ENCODE measurements at regions of chr2 and their contacts with region 1.

Region 1: GRCh38 chr2:216108967-216109921 is at the start of gene XRCC5:
- DNase-seq: peak; percentile 99
- H3K4me3 Mint-ChIP-seq: peak within 1 kb of the TSS; percentile 100
- H3K27ac Mint-ChIP-seq: peak within 1 kb of the TSS; percentile 100
- H3K4me1 Mint-ChIP-seq: peaks cover 51% of the 10 kb centered on the region
- H3K27me3 Mint-ChIP-seq: peaks cover 2% of the 10 kb centered on the region
- total RNA-seq, gene XRCC5: 510 to 515 TPM

Region 2: DNA sequence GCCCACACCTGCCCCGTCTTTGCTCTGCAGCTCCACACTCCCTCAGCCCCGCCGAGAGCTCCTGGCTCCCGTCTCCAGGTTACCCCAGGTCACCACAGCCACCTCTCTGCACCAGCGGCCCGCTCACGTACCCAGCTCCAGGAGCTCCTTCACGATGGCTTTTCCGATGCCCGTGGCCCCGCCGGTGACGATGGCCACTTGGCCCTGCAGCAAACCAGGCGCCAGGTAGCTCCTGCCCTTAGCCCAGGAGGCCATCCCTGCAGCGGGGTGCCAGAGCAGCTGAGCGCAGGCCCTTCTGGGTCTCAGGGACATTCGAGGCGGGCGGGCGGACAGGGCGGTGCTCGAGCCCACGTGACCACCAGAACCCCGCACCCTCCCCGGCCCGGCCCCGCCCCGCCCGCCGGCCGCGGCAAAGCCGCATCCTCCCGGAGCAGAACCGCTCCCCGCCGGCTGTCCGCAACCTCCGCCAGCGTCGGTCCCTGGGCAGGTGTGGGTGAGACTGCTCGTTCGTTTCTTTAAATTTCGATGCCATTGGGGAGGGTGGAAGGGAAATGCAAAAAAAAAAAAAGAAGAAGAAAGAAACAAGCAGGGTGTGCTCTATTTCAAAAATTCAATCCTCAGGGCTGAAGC is 27.6 kb before region 1 on chr2 and contains the starts of genes PECR and TMEM169:
- CTCF ChIA-PET with region 1: interaction called, 35 read pairs
- POLR2A ChIA-PET with region 1: interaction called, 9 read pairs
- intact Hi-C with region 1: loop called (anchors 1 kb)
- DNase-seq: peak; percentile 87
- H3K4me3 Mint-ChIP-seq: peak within 1 kb of the TSS; percentile 96
- H3K27ac Mint-ChIP-seq: peak within 1 kb of the TSS; percentile 81
- H3K4me1 Mint-ChIP-seq: peaks cover 51% of the 10 kb centered on the region
- H3K27me3 Mint-ChIP-seq: no peaks in the 10 kb centered on the region
- total RNA-seq, gene PECR: 23.3 to 27.6 TPM
- total RNA-seq, gene TMEM169: 2.0 to 2.7 TPM

Region 3: DNA sequence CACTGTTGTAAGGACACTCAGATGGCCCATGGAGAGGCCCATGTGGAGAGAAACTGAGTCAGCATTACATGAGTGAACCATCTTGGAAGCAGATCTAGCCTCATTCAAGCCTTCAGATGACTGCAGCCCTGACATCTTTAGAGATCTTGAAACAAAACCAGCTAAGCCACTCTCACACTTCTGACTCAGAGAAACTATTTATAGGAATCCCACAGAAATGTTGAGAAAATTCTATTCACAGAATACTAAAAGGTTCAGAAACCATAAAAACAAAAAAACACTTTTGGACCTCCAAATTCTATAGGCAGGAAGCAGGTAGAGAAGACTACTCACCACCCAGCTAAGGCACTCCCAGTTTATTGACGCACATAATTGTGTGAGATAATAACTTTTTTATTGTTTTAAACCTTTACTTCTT is 18.9 kb before region 1 on chr2:
- CTCF ChIA-PET with region 1: interaction called, 7 read pairs
- POLR2A ChIA-PET with region 1: interaction called, 5 read pairs
- intact Hi-C with region 1: loop called (anchors 1 kb)
- DNase-seq: peak; percentile 23
- H3K4me3 Mint-ChIP-seq: no peak overlapping the region
- H3K27ac Mint-ChIP-seq: peak overlapping the region; percentile 60
- H3K4me1 Mint-ChIP-seq: peaks cover 23% of the 10 kb centered on the region
- H3K27me3 Mint-ChIP-seq: no peaks in the 10 kb centered on the region

Region 4: DNA sequence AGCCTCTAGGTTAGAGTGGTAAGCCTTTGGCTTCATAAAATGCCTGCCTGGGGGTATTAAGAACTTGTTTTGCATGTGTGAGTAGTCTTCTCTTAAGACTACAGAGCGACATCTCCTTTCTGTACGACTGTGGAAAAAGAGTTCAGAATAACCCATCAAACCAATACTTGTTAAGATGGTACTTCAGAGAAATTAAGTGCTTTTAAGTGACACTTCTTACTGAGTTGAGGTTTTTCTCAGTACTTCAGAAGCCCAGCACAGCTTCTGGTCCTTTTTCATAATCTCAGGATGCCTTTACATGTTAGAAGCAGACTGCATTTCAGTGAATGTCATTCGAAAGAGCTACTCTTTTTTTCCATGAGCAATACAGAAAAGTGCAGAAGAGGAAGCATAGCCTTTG is 10.7 kb after region 1 on chr2:
- CTCF ChIA-PET with region 1: interaction called, 50 read pairs
- POLR2A ChIA-PET with region 1: interaction called, 4 read pairs
- intact Hi-C with region 1: loop called (anchors 1 kb)
- DNase-seq: no peak
- H3K4me3 Mint-ChIP-seq: peak overlapping the region; percentile 9
- H3K27ac Mint-ChIP-seq: peak overlapping the region; percentile 91
- H3K4me1 Mint-ChIP-seq: peaks cover 81% of the 10 kb centered on the region
- H3K27me3 Mint-ChIP-seq: no peaks in the 10 kb centered on the region

Region 5: DNA sequence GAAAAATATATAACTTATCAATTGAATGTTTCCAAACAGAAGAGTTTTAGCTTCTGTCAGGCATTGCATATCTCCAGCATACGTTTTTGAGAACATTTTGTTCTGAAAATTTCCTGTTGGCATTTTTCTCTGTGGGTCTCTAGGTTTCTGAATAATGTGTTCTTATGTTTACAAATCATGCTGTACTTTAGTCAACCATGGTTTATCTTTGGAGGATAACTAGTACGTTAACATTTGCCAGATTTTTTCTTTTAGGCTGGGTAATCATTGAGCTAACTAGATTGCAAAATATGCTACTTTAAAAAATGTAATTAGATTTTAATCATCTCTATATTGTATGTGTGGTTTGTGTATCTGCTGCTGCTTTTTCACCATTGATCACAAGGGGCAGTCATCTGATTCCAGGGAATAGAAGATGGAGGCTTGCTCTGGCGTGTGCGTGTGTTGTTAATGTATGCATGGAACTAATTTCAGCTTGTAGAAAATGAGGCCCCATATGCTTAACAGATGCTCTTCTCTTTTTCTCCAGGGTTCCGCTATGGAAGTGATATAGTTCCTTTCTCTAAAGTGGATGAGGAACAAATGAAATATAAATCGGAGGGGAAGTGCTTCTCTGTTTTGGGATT is 21.2 kb after region 1 on chr2:
- CTCF ChIA-PET with region 1: interaction called, 14 read pairs
- POLR2A ChIA-PET with region 1: interaction called, 4 read pairs
- intact Hi-C with region 1: loop called (anchors 1 kb)
- DNase-seq: no peak
- H3K4me3 Mint-ChIP-seq: no peak overlapping the region
- H3K27ac Mint-ChIP-seq: no peak overlapping the region
- H3K4me1 Mint-ChIP-seq: peaks cover 75% of the 10 kb centered on the region
- H3K27me3 Mint-ChIP-seq: no peaks in the 10 kb centered on the region

Region 6: GRCh38 chr2:216139884-216140283 is 30.6 kb after region 1 on chr2:
- CTCF ChIA-PET with region 1: interaction called, 48 read pairs
- POLR2A ChIA-PET with region 1: no interaction called
- intact Hi-C with region 1: loop called (anchors 1 kb)
- DNase-seq: peak; percentile 43
- H3K4me3 Mint-ChIP-seq: no peak overlapping the region
- H3K27ac Mint-ChIP-seq: no peak overlapping the region
- H3K4me1 Mint-ChIP-seq: peaks cover 23% of the 10 kb centered on the region
- H3K27me3 Mint-ChIP-seq: no peaks in the 10 kb centered on the region

Region 7: DNA sequence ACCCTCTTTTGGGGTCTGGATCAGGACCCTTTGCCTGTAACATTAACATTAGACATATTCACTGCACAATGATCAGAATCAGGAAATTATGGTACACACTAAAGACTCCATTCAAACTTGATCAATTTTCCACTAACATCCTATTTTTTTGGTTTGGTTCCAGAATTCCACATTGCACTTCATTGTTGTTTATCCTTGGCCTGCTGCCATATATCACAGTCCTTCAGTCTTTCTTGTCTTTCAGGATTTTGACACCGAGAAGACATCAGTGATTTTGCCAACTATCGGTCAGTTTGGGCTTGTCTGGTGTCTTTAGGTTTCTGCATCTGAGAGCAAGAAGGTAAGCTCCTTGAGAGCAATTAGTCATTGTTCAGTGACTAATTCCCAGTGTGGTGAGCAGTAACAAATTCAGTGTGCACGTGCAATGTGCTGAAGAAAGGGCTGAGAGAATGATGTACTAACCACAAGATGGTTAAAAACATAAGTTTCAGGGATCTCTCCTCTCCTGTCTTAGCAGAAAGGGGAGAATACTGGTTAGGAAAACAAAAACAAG is 239.6 kb after region 1 on chr2:
- CTCF ChIA-PET with region 1: no interaction called
- POLR2A ChIA-PET with region 1: no interaction called
- intact Hi-C with region 1: loop called (anchors 2 kb)
- DNase-seq: peak; percentile 52
- H3K4me3 Mint-ChIP-seq: no peak overlapping the region
- H3K27ac Mint-ChIP-seq: peak overlapping the region; percentile 36
- H3K4me1 Mint-ChIP-seq: peaks cover 66% of the 10 kb centered on the region
- H3K27me3 Mint-ChIP-seq: no peaks in the 10 kb centered on the region

Measured in activated CD4-positive, alpha-beta memory T cell treated with anti-CD3 and anti-CD28 coated beads for 36 hours (primary cell).